Caco-2 (cell line): ENCODE measurements at regions of chr15 and their contacts with region 1.

Region 1: DNA sequence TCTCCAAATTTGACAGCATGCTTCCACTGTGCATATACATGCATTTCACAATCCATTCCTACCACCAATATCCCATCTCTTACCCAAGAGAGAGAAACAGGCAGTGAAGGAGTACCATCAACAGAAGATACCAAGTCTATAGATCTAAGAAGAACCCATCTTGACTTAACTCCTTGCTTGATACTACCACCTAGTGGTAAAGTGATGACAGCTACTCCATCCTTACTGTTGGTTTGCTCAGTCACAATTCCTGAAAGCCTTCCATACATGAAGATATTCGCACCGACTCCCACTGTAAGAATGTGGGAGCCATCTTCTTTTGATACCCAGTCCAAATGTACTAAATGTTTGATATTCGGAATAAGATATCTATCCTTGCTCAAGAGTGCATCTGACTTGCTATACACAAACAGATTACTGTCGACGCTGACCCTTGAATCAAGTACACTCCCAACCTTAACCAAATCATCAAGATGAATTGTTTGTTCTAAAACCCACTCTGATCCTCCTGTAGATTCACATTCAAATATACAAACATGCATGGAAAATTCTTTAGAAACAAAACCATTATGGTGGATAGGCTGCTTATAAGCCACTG is 123.1 kb downstream of the DMXL2 start:
- DNase-seq: peak in 1 of 2 experiments; percentile 25
- H3K4me3 ChIP-seq: no peak overlapping the region
- H3K4me3 Mint-ChIP-seq: no peak overlapping the region
- H3K27ac Mint-ChIP-seq: no peak overlapping the region
- H3K4me1 ChIP-seq: 0 out of 2 replicates have a peak, but pooled peaks cover 2% of the 10 kb centered on the region
- H3K4me1 Mint-ChIP-seq: no peaks in the 10 kb centered on the region
- H3K27me3 ChIP-seq: no peaks in the 10 kb centered on the region
- H3K27me3 Mint-ChIP-seq: no peaks in the 10 kb centered on the region
- CTCF ChIP-seq: peak; percentile 42 to 58

Region 2: DNA sequence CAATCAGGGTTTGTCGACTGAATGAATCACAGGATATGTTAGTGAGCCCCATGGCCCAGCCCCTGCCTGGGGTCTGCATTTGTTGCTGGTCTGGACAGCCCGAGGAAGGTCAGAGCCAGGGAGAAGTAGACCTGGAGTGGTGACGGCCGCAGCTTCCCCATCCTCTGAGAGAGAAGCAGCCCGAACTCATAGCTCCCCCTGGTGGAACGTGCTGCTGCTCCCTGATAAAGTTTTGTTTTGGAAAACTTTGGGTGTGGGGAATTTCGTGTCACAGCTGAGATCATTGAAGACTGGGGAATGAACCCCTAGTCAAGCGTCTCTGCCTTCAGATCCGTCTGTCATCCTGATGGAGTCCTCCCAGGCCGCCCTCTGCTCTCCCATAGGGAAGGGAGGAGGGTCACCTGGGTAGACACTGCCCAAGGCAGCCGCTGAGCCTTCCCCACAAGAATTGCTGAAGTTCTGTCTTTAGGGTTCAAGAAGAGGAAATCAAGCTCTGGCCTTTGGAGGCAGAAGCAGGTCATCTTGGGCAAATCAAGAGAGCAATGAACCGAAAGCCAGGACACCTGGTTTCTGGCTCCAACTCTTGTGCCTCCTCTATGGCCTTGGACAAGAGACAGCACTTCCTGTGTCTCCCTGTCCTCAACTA is 97.5 kb before region 1 on chr15:
- CTCF ChIA-PET with region 1: no interaction called
- POLR2A ChIA-PET with region 1: no interaction called
- intact Hi-C with region 1: loop called (anchors 1 kb)
- DNase-seq: peak in 1 of 2 experiments; percentile 46
- H3K4me3 ChIP-seq: no peak overlapping the region
- H3K4me3 Mint-ChIP-seq: no peak overlapping the region
- H3K27ac Mint-ChIP-seq: no peak overlapping the region
- H3K4me1 ChIP-seq: no peaks in the 10 kb centered on the region
- H3K4me1 Mint-ChIP-seq: no peaks in the 10 kb centered on the region
- H3K27me3 ChIP-seq: no peaks in the 10 kb centered on the region
- H3K27me3 Mint-ChIP-seq: peaks cover 5% of the 10 kb centered on the region
- CTCF ChIP-seq: peak; percentile 52 to 56

Region 3: GRCh38 chr15:51536965-51537574 is 37.6 kb after region 1 on chr15:
- CTCF ChIA-PET with region 1: no interaction called
- POLR2A ChIA-PET with region 1: no interaction called
- intact Hi-C with region 1: no loop called
- DNase-seq: peak in 1 of 2 experiments; percentile 14
- H3K4me3 ChIP-seq: no peak overlapping the region
- H3K4me3 Mint-ChIP-seq: no peak overlapping the region
- H3K27ac Mint-ChIP-seq: no peak overlapping the region
- H3K4me1 ChIP-seq: no peaks in the 10 kb centered on the region
- H3K4me1 Mint-ChIP-seq: no peaks in the 10 kb centered on the region
- H3K27me3 ChIP-seq: no peaks in the 10 kb centered on the region
- H3K27me3 Mint-ChIP-seq: no peaks in the 10 kb centered on the region
- CTCF ChIP-seq: peak; percentile 36 to 59